Breast epithelium (tissue), 4 donors: ENCODE measurements at regions of chr10 and their contacts with region 1.

Region 1: DNA sequence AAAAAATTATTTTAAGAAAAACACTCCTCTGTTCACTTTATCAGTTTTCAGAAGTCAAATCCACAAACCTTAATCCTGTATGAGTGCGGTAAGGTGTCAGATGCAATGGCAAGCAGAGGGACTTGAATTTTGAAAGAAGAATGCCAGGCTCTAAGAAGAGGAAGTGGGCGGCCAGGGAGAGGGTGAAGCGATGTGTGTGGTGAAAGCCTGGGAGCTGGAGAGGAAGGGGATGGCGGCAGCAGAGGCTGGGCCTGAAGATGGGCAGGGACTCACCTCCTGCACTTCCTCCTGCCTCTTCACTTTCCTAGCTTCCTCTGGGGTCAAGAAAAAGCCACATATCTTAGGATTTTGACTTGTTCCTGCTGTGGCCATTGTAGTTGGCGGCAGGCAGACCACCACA is 609.6 kb downstream of the PARD3 start:
- DNase-seq: no peak
- H3K4me3 ChIP-seq: no peak overlapping the region
- H3K27ac ChIP-seq: no peak overlapping the region
- H3K4me1 ChIP-seq: no peaks in the 10 kb centered on the region
- H3K27me3 ChIP-seq: no peaks in the 10 kb centered on the region
- CTCF ChIP-seq: no peak
- POLR2A ChIP-seq: no peak

Region 2: GRCh38 chr10:33441561-33441960 is 763.9 kb before region 1 on chr10:
- intact Hi-C with region 1: loop called (anchors 5 kb)
- DNase-seq: no peak
- H3K4me3 ChIP-seq: no peak overlapping the region
- H3K27ac ChIP-seq: no peak overlapping the region
- H3K4me1 ChIP-seq: no peaks in the 10 kb centered on the region
- H3K27me3 ChIP-seq: no peaks in the 10 kb centered on the region
- CTCF ChIP-seq: no peak
- POLR2A ChIP-seq: no peak

Region 3: GRCh38 chr10:34254596-34254995 is 49.1 kb after region 1 on chr10:
- intact Hi-C with region 1: no loop called
- DNase-seq: no peak
- H3K4me3 ChIP-seq: no peak overlapping the region
- H3K27ac ChIP-seq: no peak overlapping the region
- H3K4me1 ChIP-seq: no peaks in the 10 kb centered on the region
- H3K27me3 ChIP-seq: no peaks in the 10 kb centered on the region
- CTCF ChIP-seq: no peak
- POLR2A ChIP-seq: no peak